Aorta (tissue), 5 donors: ENCODE measurements at regions of chr1 and their contacts with region 1.

Region 1: DNA sequence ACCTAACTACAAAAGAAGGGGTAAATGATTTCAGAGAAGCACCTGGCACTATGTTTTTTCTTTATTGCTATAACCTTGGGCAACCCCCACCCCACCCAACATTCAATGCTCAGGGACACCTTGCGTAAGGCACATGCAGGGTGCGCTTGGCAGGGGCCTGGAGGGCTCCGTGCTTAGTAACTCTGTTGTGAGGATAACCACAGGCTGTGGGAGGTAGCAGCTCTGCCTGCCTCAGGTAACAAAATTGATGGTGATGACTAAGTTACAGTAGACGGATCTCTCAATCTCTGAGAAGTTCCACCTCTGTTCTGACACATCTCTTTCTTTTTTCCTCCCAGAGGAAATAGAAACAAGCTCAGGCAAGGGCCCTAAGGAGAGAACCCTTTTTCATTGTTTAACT is 8.7 kb upstream of the CCN1 start:
- DNase-seq: no peak
- ATAC-seq: no peak
- H3K4me3 ChIP-seq: no peak overlapping the region
- H3K27ac ChIP-seq: peak overlapping the region in 1 of 2 donors; percentile 79
- H3K4me1 ChIP-seq: peaks cover 7 to 10% of the 10 kb centered on the region in 2 donors
- H3K27me3 ChIP-seq: no peaks in the 10 kb centered on the region

Region 2: GRCh38 chr1:85061711-85062424 is 510.0 kb before region 1 on chr1:
- intact Hi-C with region 1: no loop called
- DNase-seq: peak; percentile 89 to 93
- ATAC-seq: peak; percentile 97
- H3K4me3 ChIP-seq: peak overlapping the region; percentile 41 to 60
- H3K27ac ChIP-seq: peak overlapping the region in 1 of 2 donors; percentile 22
- H3K4me1 ChIP-seq: no peaks in the 10 kb centered on the region
- H3K27me3 ChIP-seq: no peaks in the 10 kb centered on the region

Region 3: DNA sequence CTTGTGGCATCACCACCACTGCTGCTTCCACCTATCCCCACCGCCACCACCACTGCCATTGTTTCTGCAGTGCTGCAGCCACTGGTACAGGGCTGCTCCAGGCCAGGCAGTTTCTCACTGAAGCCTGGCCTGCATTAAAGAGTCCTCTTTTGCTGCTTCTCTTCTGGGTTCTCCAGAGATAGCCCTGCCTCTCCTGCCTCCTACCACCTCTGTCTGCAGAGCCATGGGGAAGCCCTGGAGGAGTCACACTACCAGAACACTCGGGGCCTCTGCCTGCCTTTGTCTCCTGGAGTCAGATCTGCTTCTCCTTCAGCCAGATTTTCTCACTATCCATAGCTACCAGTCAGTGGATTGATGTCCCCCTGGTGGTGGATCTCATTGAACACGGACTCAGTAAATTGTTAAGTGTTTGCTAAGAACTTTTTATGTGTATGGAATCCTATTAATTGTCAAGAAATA is 69.2 kb before region 1 on chr1:
- intact Hi-C with region 1: loop called in 1 of 2 experiments (anchors 5 kb)
- DNase-seq: no peak
- ATAC-seq: no peak
- H3K4me3 ChIP-seq: no peak overlapping the region
- H3K27ac ChIP-seq: no peak overlapping the region
- H3K4me1 ChIP-seq: peaks cover 0 to 3% of the 10 kb centered on the region in 2 donors
- H3K27me3 ChIP-seq: no peaks in the 10 kb centered on the region

Region 4: GRCh38 chr1:85940656-85941306 is 369.0 kb after region 1 on chr1:
- intact Hi-C with region 1: no loop called
- DNase-seq: no peak
- ATAC-seq: no peak
- H3K4me3 ChIP-seq: no peak overlapping the region
- H3K27ac ChIP-seq: no peak overlapping the region
- H3K4me1 ChIP-seq: no peaks in the 10 kb centered on the region
- H3K27me3 ChIP-seq: no peaks in the 10 kb centered on the region